CD4-positive, alpha-beta T cell (primary cell): ENCODE measurements at regions of chr1 and their contacts with region 1.

Region 1: DNA sequence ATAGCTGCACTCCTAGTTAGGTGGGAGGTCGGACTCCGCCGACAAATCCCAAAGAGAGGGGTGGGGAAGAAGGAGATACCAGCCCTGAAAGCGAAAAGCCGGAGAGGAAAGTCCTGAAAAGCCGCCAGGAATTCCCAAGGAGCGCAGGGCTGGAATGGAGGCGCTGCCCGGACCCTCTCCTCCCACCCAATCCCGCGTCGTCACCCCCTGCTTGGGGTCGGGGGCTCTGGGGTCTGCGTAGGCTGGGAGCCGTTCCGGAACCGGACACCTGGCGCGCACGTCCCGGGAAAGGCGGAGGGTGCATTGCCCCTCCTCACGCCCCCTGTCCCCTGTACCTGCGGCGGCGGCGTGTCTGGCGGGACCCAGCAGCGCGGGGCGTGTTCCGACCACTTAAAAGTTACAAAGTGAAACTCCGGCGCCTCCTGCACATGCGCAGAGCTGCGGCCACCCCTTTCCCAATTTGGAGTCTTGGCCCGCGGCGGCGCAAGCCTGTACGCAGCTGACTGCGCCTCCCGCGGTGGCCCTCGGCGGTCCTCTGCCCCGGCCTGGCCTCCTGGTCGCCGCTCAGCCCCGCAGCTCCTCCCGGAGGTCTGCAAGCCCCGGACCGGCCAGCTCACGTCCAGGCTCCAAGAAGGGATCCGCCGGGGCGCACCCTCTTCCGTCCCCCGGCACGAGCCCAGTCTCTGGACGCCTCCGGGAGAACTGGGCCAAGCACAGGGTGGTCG is at the start of gene TMEM63A:
- DNase-seq: peak; percentile 85 to 95 (median 91)
- ATAC-seq: peak; percentile 64
- H3K4me3 ChIP-seq: peak within 1 kb of the TSS; percentile 74
- H3K4me3 Mint-ChIP-seq: peak within 1 kb of the TSS; percentile 97
- H3K27ac ChIP-seq: peak within 1 kb of the TSS; percentile 87 to 89
- H3K27ac Mint-ChIP-seq: peak within 1 kb of the TSS; percentile 86
- H3K4me1 ChIP-seq: peaks cover 56% of the 10 kb centered on the region
- H3K4me1 Mint-ChIP-seq: peaks cover 47% of the 10 kb centered on the region
- H3K27me3 ChIP-seq: no peaks in the 10 kb centered on the region
- H3K27me3 Mint-ChIP-seq: no peaks in the 10 kb centered on the region
- CTCF ChIP-seq: peak; percentile 33
- total RNA-seq, gene TMEM63A: 199 to 204 TPM

Region 2: DNA sequence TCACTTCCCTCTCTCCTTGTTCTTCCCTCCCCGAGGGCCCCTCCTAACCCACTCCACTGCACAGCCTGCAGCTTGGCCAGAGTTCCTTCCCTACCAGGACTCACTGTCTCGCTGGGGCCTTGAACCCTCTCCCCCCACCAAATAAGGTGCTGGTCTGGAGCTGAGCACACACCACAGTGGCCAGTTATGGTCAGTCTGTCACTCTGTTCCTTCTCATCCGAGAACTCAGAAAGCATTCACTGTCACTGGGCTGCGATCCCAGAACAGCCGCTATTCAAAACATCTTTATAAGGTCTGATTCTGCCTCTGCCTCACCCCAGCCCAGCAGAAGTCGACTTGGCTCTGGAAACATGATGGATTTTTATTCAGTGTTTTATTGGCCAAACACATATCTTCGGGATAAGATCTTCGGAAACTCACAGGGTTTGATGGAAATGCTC is 434.5 kb before region 1 on chr1:
- CTCF ChIA-PET with region 1: no interaction called
- POLR2A ChIA-PET with region 1: interaction called, 16 read pairs
- intact Hi-C with region 1: no loop called
- DNase-seq: no peak
- ATAC-seq: no peak
- H3K4me3 ChIP-seq: no peak overlapping the region
- H3K4me3 Mint-ChIP-seq: no peak overlapping the region
- H3K27ac ChIP-seq: no peak overlapping the region
- H3K27ac Mint-ChIP-seq: peak overlapping the region; percentile 51
- H3K4me1 ChIP-seq: peaks cover 59% of the 10 kb centered on the region
- H3K4me1 Mint-ChIP-seq: peaks cover 49% of the 10 kb centered on the region
- H3K27me3 ChIP-seq: no peaks in the 10 kb centered on the region
- H3K27me3 Mint-ChIP-seq: no peaks in the 10 kb centered on the region
- CTCF ChIP-seq: no peak

Region 3: DNA sequence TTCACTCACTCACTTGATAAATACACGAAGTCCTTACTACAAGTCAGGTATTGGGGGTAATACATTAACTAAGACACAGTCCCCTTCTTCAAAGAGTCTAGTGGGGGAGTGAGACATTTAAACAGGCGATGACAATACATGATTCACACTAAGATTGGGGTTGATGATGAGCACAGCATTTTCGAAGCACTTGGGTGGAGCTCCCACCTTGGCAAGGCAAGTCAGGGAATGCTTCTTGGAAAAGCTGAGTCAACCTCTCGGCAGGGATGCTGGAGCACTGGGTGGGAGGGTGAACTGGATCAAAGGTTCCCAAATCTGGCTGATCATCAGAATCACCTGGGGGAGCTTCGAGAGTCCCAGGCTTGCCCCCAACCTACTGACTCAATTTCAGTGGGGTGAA is 171.3 kb before region 1 on chr1:
- CTCF ChIA-PET with region 1: no interaction called
- POLR2A ChIA-PET with region 1: no interaction called
- intact Hi-C with region 1: no loop called
- DNase-seq: no peak
- ATAC-seq: no peak
- H3K4me3 ChIP-seq: no peak overlapping the region
- H3K4me3 Mint-ChIP-seq: no peak overlapping the region
- H3K27ac ChIP-seq: no peak overlapping the region
- H3K27ac Mint-ChIP-seq: no peak overlapping the region
- H3K4me1 ChIP-seq: no peaks in the 10 kb centered on the region
- H3K4me1 Mint-ChIP-seq: no peaks in the 10 kb centered on the region
- H3K27me3 ChIP-seq: no peaks in the 10 kb centered on the region
- H3K27me3 Mint-ChIP-seq: no peaks in the 10 kb centered on the region
- CTCF ChIP-seq: no peak

Region 4: DNA sequence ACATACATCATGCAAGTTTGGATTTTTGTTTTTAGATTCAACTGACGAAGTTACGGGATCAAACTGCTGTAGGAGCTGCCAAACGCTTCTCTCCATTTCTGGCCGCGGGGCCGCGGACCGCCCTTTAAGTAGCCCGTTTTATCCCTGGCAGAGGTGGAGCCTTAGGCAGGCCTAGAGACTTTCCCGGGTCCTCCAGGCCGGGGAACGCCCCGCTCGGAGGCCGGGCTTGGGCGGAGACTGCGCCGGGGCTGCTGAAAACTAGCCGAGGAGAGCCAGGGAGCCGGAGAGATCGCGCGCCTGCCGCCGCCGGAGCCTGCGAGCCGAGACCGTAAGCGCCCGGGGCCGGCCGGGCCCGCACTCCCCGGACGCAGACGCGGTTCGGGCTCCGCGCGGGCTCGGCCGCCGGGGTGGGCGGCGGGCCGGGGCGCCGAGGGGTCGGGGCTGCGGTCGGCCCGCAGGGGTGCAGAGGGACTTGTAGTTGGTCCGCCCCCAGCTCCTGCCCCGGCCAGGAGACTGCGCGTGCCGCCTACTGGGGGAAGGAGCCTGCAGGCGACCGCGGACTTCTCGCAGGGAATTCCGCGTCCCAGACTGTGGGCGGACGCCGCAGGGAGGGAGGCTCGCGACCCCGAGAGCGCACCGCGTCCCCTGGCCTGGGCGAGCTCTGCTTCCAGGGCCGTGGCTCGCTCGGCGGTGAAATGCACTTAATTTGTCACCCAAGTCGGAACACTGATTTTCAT is 72.1 kb before region 1 on chr1 and contains the start of gene EPHX1:
- CTCF ChIA-PET with region 1: no interaction called
- POLR2A ChIA-PET with region 1: interaction called, 12 read pairs
- intact Hi-C with region 1: no loop called
- DNase-seq: peak; percentile 26 to 75 (median 56)
- ATAC-seq: peak; percentile 84
- H3K4me3 ChIP-seq: peak within 1 kb of the TSS; percentile 51
- H3K4me3 Mint-ChIP-seq: peak within 1 kb of the TSS; percentile 87
- H3K27ac ChIP-seq: no peak within 1 kb of the TSS
- H3K27ac Mint-ChIP-seq: no peak within 1 kb of the TSS
- H3K4me1 ChIP-seq: peaks cover 10% of the 10 kb centered on the region
- H3K4me1 Mint-ChIP-seq: no peaks in the 10 kb centered on the region
- H3K27me3 ChIP-seq: no peaks in the 10 kb centered on the region
- H3K27me3 Mint-ChIP-seq: no peaks in the 10 kb centered on the region
- CTCF ChIP-seq: no peak
- total RNA-seq, gene EPHX1: 0.34 to 0.47 TPM

Region 5: DNA sequence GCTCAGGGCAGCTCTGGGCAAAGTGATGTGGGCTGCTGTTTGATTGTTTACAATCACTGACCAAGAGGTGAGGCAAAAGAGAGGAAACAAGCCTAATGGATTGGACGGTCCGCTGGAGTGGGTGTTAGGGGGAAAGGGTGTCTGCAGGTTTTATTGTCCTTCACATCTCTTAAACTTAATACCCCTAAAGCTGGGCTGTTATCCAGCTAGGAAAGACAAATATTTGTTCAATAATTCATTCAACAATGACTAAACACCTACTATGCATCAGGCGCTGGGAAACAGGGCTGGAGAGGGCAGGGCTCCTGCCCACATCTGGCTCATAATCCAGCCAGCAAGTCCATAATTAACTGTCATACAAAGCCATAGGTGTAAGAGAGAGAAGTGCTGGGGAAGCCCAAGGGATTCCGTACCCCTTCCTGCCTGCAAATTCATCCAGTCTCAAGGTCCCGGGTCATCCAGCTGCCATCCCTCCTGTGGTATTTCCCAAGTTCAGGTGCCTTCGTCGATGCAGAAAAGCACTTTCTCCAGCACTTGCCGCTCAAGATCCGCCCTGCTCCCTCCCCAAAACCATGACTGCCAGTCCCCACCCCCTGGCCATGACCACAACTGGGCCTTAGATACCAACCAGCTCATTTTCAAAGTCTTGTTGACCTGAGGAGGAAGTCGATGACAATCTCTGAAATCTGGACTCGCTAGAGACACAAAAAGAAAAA is 10.6 kb before region 1 on chr1:
- CTCF ChIA-PET with region 1: interaction called, 5 read pairs
- POLR2A ChIA-PET with region 1: interaction called, 41 read pairs
- intact Hi-C with region 1: loop called in 1 of 2 experiments (anchors 2 kb)
- DNase-seq: peak in 1 of 14 experiments; percentile 40
- ATAC-seq: no peak
- H3K4me3 ChIP-seq: no peak overlapping the region
- H3K4me3 Mint-ChIP-seq: no peak overlapping the region
- H3K27ac ChIP-seq: peak overlapping the region in 1 of 2 donors; percentile 2
- H3K27ac Mint-ChIP-seq: peak overlapping the region; percentile 69
- H3K4me1 ChIP-seq: peaks cover 78% of the 10 kb centered on the region
- H3K4me1 Mint-ChIP-seq: peaks cover 73% of the 10 kb centered on the region
- H3K27me3 ChIP-seq: no peaks in the 10 kb centered on the region
- H3K27me3 Mint-ChIP-seq: no peaks in the 10 kb centered on the region
- CTCF ChIP-seq: no peak

Region 6: GRCh38 chr1:225904886-225905285 is 22.8 kb after region 1 on chr1:
- CTCF ChIA-PET with region 1: no interaction called
- POLR2A ChIA-PET with region 1: interaction called, 427 read pairs
- intact Hi-C with region 1: loop called in 1 of 2 experiments (anchors 2 kb)
- DNase-seq: no peak
- ATAC-seq: no peak
- H3K4me3 ChIP-seq: no peak overlapping the region
- H3K4me3 Mint-ChIP-seq: no peak overlapping the region
- H3K27ac ChIP-seq: no peak overlapping the region
- H3K27ac Mint-ChIP-seq: no peak overlapping the region
- H3K4me1 ChIP-seq: peaks cover 14% of the 10 kb centered on the region
- H3K4me1 Mint-ChIP-seq: peaks cover 36% of the 10 kb centered on the region
- H3K27me3 ChIP-seq: no peaks in the 10 kb centered on the region
- H3K27me3 Mint-ChIP-seq: no peaks in the 10 kb centered on the region
- CTCF ChIP-seq: no peak

Region 7: GRCh38 chr1:225923692-225924555 is 41.8 kb after region 1 on chr1 and contains the start of gene PYCR2:
- CTCF ChIA-PET with region 1: interaction called, 5 read pairs
- POLR2A ChIA-PET with region 1: interaction called, 84 read pairs
- intact Hi-C with region 1: no loop called
- DNase-seq: peak; percentile 87 to 98 (median 93)
- ATAC-seq: peak; percentile 98
- H3K4me3 ChIP-seq: peak within 1 kb of the TSS; percentile 95
- H3K4me3 Mint-ChIP-seq: peak within 1 kb of the TSS; percentile 95
- H3K27ac ChIP-seq: peak within 1 kb of the TSS; percentile 79 to 89
- H3K27ac Mint-ChIP-seq: peak within 1 kb of the TSS; percentile 98
- H3K4me1 ChIP-seq: peaks cover 74% of the 10 kb centered on the region
- H3K4me1 Mint-ChIP-seq: peaks cover 54% of the 10 kb centered on the region
- H3K27me3 ChIP-seq: no peaks in the 10 kb centered on the region
- H3K27me3 Mint-ChIP-seq: no peaks in the 10 kb centered on the region
- CTCF ChIP-seq: no peak
- total RNA-seq, gene PYCR2: 24.1 to 26.2 TPM